Endothelial cell of umbilical vein (primary cell): ENCODE measurements at regions of chr6 and their contacts with region 1.

Region 1: DNA sequence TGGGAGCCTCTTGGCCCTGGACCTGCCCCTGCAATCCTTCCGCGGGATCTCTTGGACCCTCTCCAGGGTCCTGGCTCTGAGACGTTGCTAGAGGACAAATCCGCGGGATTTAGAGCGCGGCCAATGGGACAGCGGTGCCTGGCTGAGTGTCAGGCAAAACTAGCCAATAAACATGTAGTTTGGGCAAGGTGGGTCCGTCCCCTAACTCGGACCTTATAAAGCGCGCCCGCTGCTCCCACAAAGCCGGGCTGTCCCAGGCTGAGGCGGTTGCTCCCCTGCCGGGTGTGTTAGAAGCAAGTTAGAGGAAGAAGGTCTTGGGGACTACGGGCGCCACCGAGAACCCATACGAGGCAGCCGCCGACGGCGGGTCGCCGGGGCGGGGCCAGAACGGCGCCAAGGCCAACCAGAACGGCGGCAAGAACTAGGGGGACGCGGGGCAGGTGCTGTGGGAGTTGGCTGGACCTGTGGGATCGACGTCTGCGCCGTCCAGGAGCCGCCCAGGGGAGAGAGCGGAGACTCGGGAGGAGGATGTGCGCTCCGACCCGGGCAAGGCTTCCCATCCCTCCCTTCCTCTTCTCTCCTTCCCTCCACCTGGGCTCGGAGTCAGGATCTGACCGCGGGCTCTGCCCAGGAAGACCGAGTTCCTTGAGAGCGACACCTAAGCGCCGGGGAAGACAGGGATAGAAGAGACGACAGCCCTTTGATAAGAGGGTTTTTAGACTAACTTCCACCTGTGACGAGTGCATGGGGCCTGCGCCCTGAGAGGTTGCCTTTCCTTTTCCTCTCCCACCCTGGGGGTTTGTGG is 6.5 kb upstream of the TMEM14A start:
- DNase-seq: peak; percentile 95
- H3K4me3 ChIP-seq: peak overlapping the region; percentile 46 to 92 (median 54)
- H3K27ac ChIP-seq: peak overlapping the region; percentile 39
- H3K4me1 ChIP-seq: peaks cover 15% of the 10 kb centered on the region
- H3K27me3 ChIP-seq: no peaks in the 10 kb centered on the region
- CTCF ChIP-seq: no peak
- POLR2A ChIP-seq: peak; percentile 96

Region 2: GRCh38 chr6:52162940-52163908 is 501.2 kb before region 1 on chr6:
- CTCF ChIA-PET with region 1: interaction called, 5 read pairs
- POLR2A ChIA-PET with region 1: no interaction called
- dilution Hi-C with region 1: no loop called
- intact Hi-C with region 1: loop called (anchors 2 kb)
- DNase-seq: peak; percentile 16
- H3K4me3 ChIP-seq: no peak overlapping the region
- H3K27ac ChIP-seq: no peak overlapping the region
- H3K4me1 ChIP-seq: no peaks in the 10 kb centered on the region
- H3K27me3 ChIP-seq: peaks cover 2 to 7% of the 10 kb centered on the region in 2 experiments
- CTCF ChIP-seq: peak; percentile 12 to 24
- POLR2A ChIP-seq: no peak

Region 3: DNA sequence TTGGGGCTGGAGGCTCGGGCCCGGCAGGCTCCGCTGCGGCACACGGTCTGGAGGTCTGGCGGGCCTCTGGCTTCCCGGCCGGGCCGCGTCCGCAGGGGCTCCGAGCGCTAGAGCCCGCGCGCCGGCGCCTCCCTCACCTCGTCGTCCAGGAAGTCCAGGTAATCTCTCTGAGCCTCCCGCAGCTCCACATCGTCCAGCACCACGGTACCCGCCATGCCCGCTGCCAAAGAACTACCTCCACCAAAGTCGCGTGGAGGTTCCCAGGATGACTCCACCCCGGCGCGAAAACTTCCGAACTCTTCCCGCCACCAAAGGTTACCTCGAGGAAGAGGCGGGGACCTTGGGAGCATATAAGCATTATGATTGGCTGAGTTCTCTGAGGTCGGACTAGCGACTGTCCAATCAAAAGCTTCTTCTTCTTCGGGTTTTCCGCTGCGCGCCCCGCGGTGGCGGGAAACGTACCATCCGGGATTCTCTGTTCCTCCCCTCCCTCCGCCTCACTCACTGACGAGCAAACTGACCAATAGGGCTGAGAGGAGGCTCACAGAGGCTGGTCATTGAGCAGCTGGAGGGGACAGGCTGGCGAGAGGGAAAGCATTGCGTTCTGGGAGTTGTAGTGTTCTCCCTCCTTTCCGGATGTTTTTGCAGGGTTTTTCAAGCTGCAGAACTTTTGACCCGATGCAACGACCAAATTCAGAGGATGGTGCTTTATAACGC is 379.8 kb before region 1 on chr6 and contains the start of gene MCM3:
- CTCF ChIA-PET with region 1: interaction called, 9 read pairs
- POLR2A ChIA-PET with region 1: no interaction called
- dilution Hi-C with region 1: no loop called
- intact Hi-C with region 1: loop called (anchors 1 kb)
- DNase-seq: peak; percentile 100
- H3K4me3 ChIP-seq: peak within 1 kb of the TSS; percentile 59 to 92 (median 71)
- H3K27ac ChIP-seq: peak within 1 kb of the TSS; percentile 51
- H3K4me1 ChIP-seq: peaks cover 15% of the 10 kb centered on the region
- H3K27me3 ChIP-seq: no peaks in the 10 kb centered on the region
- CTCF ChIP-seq: no peak
- POLR2A ChIP-seq: peak; percentile 47
- total RNA-seq, gene MCM3: 80.6 and 81.6 TPM in 2 replicates

Region 4: GRCh38 chr6:52407467-52407866 is 256.9 kb before region 1 on chr6:
- CTCF ChIA-PET with region 1: interaction called, 100 read pairs
- POLR2A ChIA-PET with region 1: no interaction called
- dilution Hi-C with region 1: no loop called
- intact Hi-C with region 1: loop called (anchors 1 kb)
- DNase-seq: peak; percentile 71
- H3K4me3 ChIP-seq: no peak overlapping the region
- H3K27ac ChIP-seq: no peak overlapping the region
- H3K4me1 ChIP-seq: no peaks in the 10 kb centered on the region
- H3K27me3 ChIP-seq: no peaks in the 10 kb centered on the region
- CTCF ChIP-seq: peak; percentile 45 to 58
- POLR2A ChIP-seq: no peak

Region 5: GRCh38 chr6:52517502-52518278 is 146.7 kb before region 1 on chr6:
- CTCF ChIA-PET with region 1: interaction called, 10 read pairs
- POLR2A ChIA-PET with region 1: no interaction called
- dilution Hi-C with region 1: no loop called
- intact Hi-C with region 1: no loop called
- DNase-seq: peak; percentile 94
- H3K4me3 ChIP-seq: no peak overlapping the region
- H3K27ac ChIP-seq: peak overlapping the region; percentile 97
- H3K4me1 ChIP-seq: peaks cover 69% of the 10 kb centered on the region
- H3K27me3 ChIP-seq: no peaks in the 10 kb centered on the region
- CTCF ChIP-seq: no peak
- POLR2A ChIP-seq: peak; percentile 27

Region 6: GRCh38 chr6:52647199-52647598 is 17.2 kb before region 1 on chr6:
- CTCF ChIA-PET with region 1: interaction called, 56 read pairs
- POLR2A ChIA-PET with region 1: no interaction called
- dilution Hi-C with region 1: no loop called
- intact Hi-C with region 1: no loop called
- DNase-seq: no peak
- H3K4me3 ChIP-seq: no peak overlapping the region
- H3K27ac ChIP-seq: no peak overlapping the region
- H3K4me1 ChIP-seq: no peaks in the 10 kb centered on the region
- H3K27me3 ChIP-seq: peaks cover 0 to 2% of the 10 kb centered on the region in 2 experiments
- CTCF ChIP-seq: no peak
- POLR2A ChIP-seq: no peak